Caco-2 (cell line): ENCODE measurements at regions of chr5 and their contacts with region 1.

Region 1: DNA sequence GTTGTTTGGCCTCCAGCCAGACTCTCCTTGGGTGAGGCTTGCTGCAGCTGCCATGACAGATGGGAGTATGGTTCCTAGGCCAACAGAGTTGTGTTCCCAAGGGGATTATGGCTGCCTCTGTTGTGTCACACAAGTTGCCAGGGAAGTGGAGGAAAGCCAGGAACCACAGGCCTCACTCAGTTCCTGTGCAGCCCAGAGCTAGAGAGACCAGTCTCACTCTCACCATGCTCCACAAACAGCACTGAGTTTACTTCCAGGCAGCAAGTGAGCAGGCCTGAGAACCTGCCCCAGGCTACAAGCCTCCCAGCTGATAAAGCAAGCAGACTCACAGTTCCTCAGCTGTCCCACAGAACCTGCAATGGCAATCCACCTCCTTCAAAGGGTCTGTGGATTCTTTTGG is 273.6 kb upstream of the TAS2R1 start:
- DNase-seq: no peak
- H3K4me3 ChIP-seq: no peak overlapping the region
- H3K4me3 Mint-ChIP-seq: no peak overlapping the region
- H3K27ac Mint-ChIP-seq: no peak overlapping the region
- H3K4me1 ChIP-seq: no peaks in the 10 kb centered on the region
- H3K4me1 Mint-ChIP-seq: no peaks in the 10 kb centered on the region
- H3K27me3 ChIP-seq: no peaks in the 10 kb centered on the region
- H3K27me3 Mint-ChIP-seq: no peaks in the 10 kb centered on the region
- CTCF ChIP-seq: no peak

Region 2: GRCh38 chr5:10030210-10030831 is 126.5 kb after region 1 on chr5:
- CTCF ChIA-PET with region 1: interaction called, 3 read pairs
- POLR2A ChIA-PET with region 1: no interaction called
- intact Hi-C with region 1: loop called (anchors 10 kb)
- DNase-seq: peak in 1 of 2 experiments; percentile 35
- H3K4me3 ChIP-seq: no peak overlapping the region
- H3K4me3 Mint-ChIP-seq: no peak overlapping the region
- H3K27ac Mint-ChIP-seq: no peak overlapping the region
- H3K4me1 ChIP-seq: no peaks in the 10 kb centered on the region
- H3K4me1 Mint-ChIP-seq: no peaks in the 10 kb centered on the region
- H3K27me3 ChIP-seq: no peaks in the 10 kb centered on the region
- H3K27me3 Mint-ChIP-seq: peaks cover 2% of the 10 kb centered on the region
- CTCF ChIP-seq: no peak

Region 3: GRCh38 chr5:10046676-10047075 is 142.9 kb after region 1 on chr5:
- CTCF ChIA-PET with region 1: no interaction called
- POLR2A ChIA-PET with region 1: no interaction called
- intact Hi-C with region 1: no loop called
- DNase-seq: no peak
- H3K4me3 ChIP-seq: no peak overlapping the region
- H3K4me3 Mint-ChIP-seq: no peak overlapping the region
- H3K27ac Mint-ChIP-seq: no peak overlapping the region
- H3K4me1 ChIP-seq: no peaks in the 10 kb centered on the region
- H3K4me1 Mint-ChIP-seq: no peaks in the 10 kb centered on the region
- H3K27me3 ChIP-seq: no peaks in the 10 kb centered on the region
- H3K27me3 Mint-ChIP-seq: no peaks in the 10 kb centered on the region
- CTCF ChIP-seq: no peak